ENCODE measurements at regions of chr9 and their contacts with region 1.

Region 1: DNA sequence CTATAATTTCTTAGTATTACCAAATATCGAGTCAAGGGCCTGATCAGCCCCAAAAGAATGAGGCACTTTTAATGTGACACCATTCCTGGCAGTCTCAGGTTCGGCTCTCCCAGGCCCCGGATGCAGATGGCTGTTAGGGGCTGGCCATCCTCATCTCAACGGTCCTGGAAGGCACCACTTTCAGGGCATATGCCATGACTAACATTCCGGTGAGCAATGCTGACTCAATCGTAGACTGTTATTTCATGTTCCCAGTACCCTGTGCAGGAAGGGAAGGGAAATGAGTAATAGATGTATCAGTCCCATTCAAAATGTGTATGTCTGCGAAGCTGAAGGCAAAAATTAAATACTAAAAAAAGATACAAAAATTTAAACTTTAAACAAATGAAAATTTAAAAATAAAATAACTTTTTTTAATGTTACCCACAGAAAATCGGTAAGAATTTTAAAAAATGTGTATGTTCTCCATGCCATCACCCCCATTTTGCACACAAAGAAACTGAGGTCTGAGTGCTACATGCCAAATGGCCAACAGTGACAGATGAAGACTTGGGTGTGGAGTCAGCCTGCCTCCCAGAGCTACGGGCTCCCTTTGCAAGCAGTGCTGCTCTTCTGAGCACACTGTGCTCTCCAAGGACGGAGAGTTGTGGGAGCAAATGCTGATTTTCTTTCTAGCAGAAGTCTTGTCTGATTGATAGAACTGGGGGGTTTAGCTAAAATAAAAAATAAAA is 79.0 kb downstream of the GLDC start:
- DNase-seq: peak; percentile 97
- ATAC-seq: peak; percentile 82
- H3K4me3 ChIP-seq: peak overlapping the region; percentile 59
- H3K27ac ChIP-seq: peak overlapping the region; percentile 100
- H3K4me1 ChIP-seq: peaks cover 43% of the 10 kb centered on the region
- H3K27me3 ChIP-seq: no peaks in the 10 kb centered on the region
- CTCF ChIP-seq: no peak

Region 2: GRCh38 chr9:6055213-6055612 is 511.4 kb before region 1 on chr9:
- CTCF ChIA-PET with region 1: no interaction called
- POLR2A ChIA-PET with region 1: no interaction called
- intact Hi-C with region 1: loop called (anchors 1 kb)
- DNase-seq: peak; percentile 90
- ATAC-seq: peak; percentile 83
- H3K4me3 ChIP-seq: no peak overlapping the region
- H3K27ac ChIP-seq: peak overlapping the region; percentile 61
- H3K4me1 ChIP-seq: peaks cover 15% of the 10 kb centered on the region
- H3K27me3 ChIP-seq: no peaks in the 10 kb centered on the region
- CTCF ChIP-seq: peak; percentile 66

Region 3: DNA sequence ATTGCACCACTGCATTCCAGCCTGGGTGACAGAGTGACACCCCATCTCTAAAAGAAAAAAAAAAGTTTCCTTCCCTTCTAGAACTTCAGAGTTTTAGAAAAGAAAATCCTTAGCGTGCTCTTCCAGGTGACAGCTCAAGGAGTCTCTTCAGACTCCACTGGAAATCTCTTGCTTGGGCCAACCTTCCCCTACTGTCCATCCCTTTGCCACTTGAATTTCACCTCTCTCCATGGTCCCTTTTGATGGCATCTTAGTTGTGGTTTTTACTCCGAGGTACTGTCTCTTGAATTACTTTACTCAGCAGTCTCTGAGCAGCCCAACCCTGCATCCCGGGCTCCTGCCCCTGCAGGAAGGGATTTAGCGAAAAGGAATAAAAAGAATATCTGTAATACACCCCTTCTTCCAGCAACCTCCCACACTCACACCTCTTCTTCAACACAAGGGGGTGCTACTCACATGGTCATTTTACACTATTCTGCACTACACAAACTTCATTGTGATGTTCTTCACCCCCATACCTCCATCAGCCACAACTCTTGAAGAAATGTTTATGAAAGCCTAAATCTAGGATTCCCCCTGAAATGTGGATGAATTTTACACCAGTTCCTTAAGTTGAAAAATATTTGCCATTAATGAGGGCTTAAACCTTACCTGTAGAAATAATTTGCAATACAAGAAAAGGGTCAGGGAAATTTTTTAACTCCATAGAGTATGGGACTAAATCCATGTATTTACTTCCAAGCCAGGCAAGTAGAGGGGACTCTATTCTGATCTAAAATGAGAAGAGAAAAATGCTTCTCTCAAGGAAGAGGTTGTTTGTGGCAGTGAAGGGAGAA is 212.5 kb before region 1 on chr9:
- CTCF ChIA-PET with region 1: interaction called, 4 read pairs
- POLR2A ChIA-PET with region 1: interaction called, 3 read pairs
- intact Hi-C with region 1: loop called (anchors 1 kb)
- DNase-seq: peak; percentile 54
- ATAC-seq: peak; percentile 85
- H3K4me3 ChIP-seq: no peak overlapping the region
- H3K27ac ChIP-seq: no peak overlapping the region
- H3K4me1 ChIP-seq: peaks cover 21% of the 10 kb centered on the region
- H3K27me3 ChIP-seq: no peaks in the 10 kb centered on the region
- CTCF ChIP-seq: peak; percentile 73

Region 4: GRCh38 chr9:6428940-6429889 is 137.4 kb before region 1 on chr9:
- CTCF ChIA-PET with region 1: no interaction called
- POLR2A ChIA-PET with region 1: no interaction called
- intact Hi-C with region 1: loop called (anchors 5 kb)
- DNase-seq: no peak
- ATAC-seq: no peak
- H3K4me3 ChIP-seq: no peak overlapping the region
- H3K27ac ChIP-seq: no peak overlapping the region
- H3K4me1 ChIP-seq: no peaks in the 10 kb centered on the region
- H3K27me3 ChIP-seq: no peaks in the 10 kb centered on the region
- CTCF ChIP-seq: no peak

Region 5: DNA sequence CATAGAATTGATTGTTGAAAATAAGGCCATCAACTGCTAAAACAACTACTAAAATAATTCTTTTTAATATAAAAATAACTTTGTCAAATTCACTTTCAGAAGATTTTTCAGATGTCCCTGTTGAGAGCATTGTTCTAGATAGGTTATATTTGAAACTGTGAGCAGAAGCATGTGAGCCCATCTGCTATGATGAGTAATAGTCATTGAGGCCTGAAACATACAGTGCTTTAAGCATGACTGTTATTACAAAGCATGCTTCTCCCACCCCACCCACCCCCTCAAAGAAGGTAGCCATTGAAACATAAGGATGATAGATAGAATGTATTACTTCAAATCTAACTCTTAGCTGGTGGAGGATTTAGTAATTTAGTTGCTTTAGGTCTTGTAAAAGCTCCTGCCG is 67.6 kb before region 1 on chr9:
- CTCF ChIA-PET with region 1: interaction called, 3 read pairs
- POLR2A ChIA-PET with region 1: no interaction called
- intact Hi-C with region 1: loop called (anchors 1 kb)
- DNase-seq: peak; percentile 3
- ATAC-seq: no peak
- H3K4me3 ChIP-seq: no peak overlapping the region
- H3K27ac ChIP-seq: no peak overlapping the region
- H3K4me1 ChIP-seq: peaks cover 16% of the 10 kb centered on the region
- H3K27me3 ChIP-seq: no peaks in the 10 kb centered on the region
- CTCF ChIP-seq: no peak

Region 6: GRCh38 chr9:6525326-6526045 is 41.1 kb before region 1 on chr9:
- CTCF ChIA-PET with region 1: no interaction called
- POLR2A ChIA-PET with region 1: no interaction called
- intact Hi-C with region 1: no loop called
- DNase-seq: no peak
- ATAC-seq: no peak
- H3K4me3 ChIP-seq: no peak overlapping the region
- H3K27ac ChIP-seq: no peak overlapping the region
- H3K4me1 ChIP-seq: no peaks in the 10 kb centered on the region
- H3K27me3 ChIP-seq: no peaks in the 10 kb centered on the region
- CTCF ChIP-seq: no peak

Region 7: DNA sequence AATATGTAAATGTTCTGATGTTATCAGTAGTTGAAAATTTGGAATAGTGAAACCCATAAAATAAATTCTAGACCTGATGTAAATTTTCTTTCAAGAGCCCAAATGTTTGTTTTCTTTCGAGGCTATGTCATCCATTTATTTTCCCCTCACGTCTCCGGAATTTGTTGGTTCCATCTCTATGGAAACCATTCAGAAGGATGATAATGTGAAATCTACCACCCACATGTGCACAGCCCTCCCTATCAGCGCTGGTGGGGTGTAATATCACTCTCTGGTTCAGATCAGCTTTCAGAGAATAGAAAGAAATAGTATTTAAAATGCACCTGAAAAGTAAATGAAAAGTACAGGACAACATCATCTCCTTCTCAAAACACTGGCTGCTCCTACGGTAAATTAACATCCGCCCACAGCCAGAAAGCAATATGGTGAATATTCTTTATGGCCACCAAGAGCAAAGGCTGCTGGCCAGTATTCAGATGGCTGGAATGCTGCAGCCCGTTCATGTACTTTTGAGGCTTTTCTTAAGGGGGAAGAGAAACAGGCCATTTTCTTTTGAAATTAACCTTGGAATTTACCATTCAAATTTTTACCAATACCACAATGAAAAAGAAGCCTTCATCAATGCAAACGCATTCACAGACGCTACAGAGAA is 50.5 kb after region 1 on chr9:
- CTCF ChIA-PET with region 1: no interaction called
- POLR2A ChIA-PET with region 1: no interaction called
- intact Hi-C with region 1: no loop called
- DNase-seq: no peak
- ATAC-seq: no peak
- H3K4me3 ChIP-seq: no peak overlapping the region
- H3K27ac ChIP-seq: no peak overlapping the region
- H3K4me1 ChIP-seq: no peaks in the 10 kb centered on the region
- H3K27me3 ChIP-seq: no peaks in the 10 kb centered on the region
- CTCF ChIP-seq: no peak